ENCODE measurements at regions of chr5 and their contacts with region 1.

Region 1: GRCh38 chr5:67209142-67209771 is 12.7 kb upstream of the CD180 start:
- DNase-seq: peak; percentile 84
- H3K4me3 ChIP-seq: no peak overlapping the region
- H3K27ac ChIP-seq: no peak overlapping the region
- H3K4me1 ChIP-seq: peaks cover 50% of the 10 kb centered on the region
- H3K27me3 ChIP-seq: no peaks in the 10 kb centered on the region
- CTCF ChIP-seq: peak; percentile 50 to 67

Region 2: GRCh38 chr5:66807743-66808142 is 401.5 kb before region 1 on chr5:
- CTCF ChIA-PET with region 1: no interaction called
- dilution Hi-C with region 1: no loop called
- in situ Hi-C with region 1: loop called in 1 of 2 experiments (anchors 10 kb)
- intact Hi-C with region 1: loop called (anchors 1 kb)
- DNase-seq: peak; percentile 80
- H3K4me3 ChIP-seq: no peak overlapping the region
- H3K27ac ChIP-seq: no peak overlapping the region
- H3K4me1 ChIP-seq: peaks cover 11% of the 10 kb centered on the region
- H3K27me3 ChIP-seq: no peaks in the 10 kb centered on the region
- CTCF ChIP-seq: peak; percentile 62 to 75

Region 3: DNA sequence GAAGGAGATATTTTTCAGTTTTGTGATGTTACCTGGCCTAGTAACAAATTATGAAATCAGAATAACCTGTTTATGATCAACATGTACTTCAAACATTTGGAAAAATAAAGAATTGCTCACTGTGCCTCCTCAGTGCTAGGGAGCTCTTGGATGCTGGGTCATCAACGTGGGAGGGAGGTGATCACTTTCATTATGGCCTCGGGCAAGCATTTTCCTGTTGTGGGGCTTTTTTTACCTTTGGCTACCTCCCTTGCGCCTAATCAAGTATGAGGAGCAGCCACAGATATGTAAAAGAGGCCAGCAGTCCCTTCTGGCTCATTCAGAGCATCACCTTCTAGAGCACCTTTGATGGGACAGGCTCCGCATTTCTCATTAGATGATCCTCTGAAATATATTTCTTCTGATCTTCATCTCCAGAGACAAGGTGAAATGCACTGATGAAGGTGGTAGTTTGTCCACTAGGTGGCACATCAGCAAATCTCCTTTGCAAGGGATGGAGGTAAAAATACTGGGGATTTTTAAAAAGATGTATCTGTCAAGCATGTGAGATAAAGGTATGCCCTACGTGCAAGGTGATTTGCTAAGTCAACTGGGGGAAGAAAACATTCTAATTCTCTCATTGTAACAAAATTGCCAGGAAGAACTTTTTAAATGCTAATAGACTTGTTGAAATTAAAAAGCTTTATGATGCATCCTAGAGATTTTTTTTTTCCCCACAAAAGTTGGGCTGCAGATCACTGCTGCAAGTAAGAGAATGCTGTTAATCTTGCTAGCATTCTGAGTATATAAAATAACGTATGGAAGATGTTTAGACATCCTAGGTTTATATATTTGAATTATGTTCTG is 394.9 kb before region 1 on chr5:
- CTCF ChIA-PET with region 1: interaction called, 3 read pairs
- dilution Hi-C with region 1: no loop called
- in situ Hi-C with region 1: loop called in 1 of 2 experiments (anchors 10 kb)
- intact Hi-C with region 1: loop called (anchors 2 kb)
- DNase-seq: peak; percentile 66
- H3K4me3 ChIP-seq: peak overlapping the region in 1 of 3 experiments; percentile 3
- H3K27ac ChIP-seq: no peak overlapping the region
- H3K4me1 ChIP-seq: peaks cover 6% of the 10 kb centered on the region
- H3K27me3 ChIP-seq: no peaks in the 10 kb centered on the region
- CTCF ChIP-seq: peak; percentile 73 to 78

Region 4: DNA sequence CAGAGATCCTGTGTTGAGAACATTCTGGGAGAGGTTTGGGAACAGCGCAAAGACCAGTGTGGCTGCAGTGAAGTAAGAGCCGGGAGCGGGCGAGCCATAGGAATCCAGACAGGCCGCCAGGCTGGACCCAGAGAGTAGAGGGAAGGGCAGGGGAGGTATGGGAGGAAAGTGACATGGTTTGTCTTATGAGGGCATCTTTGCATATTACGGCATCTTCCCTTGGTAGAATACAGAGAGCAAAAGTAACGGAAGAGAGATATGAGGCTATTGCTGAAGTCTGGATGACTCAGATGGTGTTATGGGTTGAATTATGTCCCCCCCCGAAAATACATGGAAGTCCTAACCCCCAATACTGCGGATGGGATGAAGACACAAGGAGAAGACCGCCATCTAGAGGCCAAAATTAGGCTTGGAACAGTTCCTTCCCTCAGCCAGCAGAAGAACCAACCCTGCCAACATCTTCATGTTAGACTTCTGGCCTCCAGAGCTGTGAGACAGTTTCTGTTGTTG is 344.9 kb before region 1 on chr5:
- CTCF ChIA-PET with region 1: interaction called, 9 read pairs
- dilution Hi-C with region 1: no loop called
- in situ Hi-C with region 1: no loop called
- intact Hi-C with region 1: loop called (anchors 1 kb)
- DNase-seq: peak; percentile 65
- H3K4me3 ChIP-seq: no peak overlapping the region
- H3K27ac ChIP-seq: no peak overlapping the region
- H3K4me1 ChIP-seq: peaks cover 11% of the 10 kb centered on the region
- H3K27me3 ChIP-seq: no peaks in the 10 kb centered on the region
- CTCF ChIP-seq: peak; percentile 60 to 73

Region 5: DNA sequence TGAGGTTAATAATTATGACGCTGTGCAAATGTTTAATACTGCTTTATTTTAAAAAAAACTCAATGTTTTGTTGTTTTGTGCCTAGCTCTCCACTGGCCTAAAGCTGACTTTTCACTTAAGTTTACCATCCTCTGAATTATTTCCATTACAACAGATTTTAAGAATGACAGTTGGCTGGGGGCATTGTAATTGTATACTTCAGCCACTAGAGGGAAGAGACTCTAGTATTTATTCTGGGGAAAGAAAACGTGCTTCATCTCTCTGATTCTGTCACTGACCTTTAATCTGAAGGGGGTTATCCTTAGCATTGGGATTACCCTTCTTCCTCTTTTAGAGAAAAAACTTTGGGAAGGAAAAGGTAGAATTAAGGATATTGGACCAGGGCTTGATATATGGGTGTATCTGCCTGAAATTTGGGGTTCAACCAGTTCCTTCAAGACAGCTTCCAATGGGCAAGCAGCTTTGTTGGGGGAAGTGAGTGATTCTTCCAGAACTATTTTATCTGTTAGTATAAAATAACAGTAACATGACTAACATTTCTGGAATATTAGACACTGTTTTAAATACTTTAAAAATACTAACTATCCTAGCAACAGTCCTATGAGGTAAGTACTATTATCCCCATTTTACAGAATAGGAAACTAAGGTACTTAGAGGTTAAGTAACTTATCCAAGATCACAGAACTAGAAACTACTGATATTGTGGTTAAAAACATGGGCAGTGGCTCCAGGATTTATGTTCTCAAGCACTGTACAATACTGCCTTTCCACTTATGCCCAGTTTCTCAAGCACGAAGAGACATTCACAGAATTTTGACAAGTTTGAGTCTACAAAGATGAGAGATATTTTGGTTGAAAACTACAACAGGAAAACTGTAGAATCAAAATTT is 221.1 kb before region 1 on chr5:
- CTCF ChIA-PET with region 1: no interaction called
- dilution Hi-C with region 1: no loop called
- in situ Hi-C with region 1: no loop called
- intact Hi-C with region 1: loop called (anchors 5 kb)
- DNase-seq: no peak
- H3K4me3 ChIP-seq: no peak overlapping the region
- H3K27ac ChIP-seq: peak overlapping the region; percentile 81
- H3K4me1 ChIP-seq: peaks cover 35% of the 10 kb centered on the region
- H3K27me3 ChIP-seq: no peaks in the 10 kb centered on the region
- CTCF ChIP-seq: peak; percentile 75 to 76

Region 6: GRCh38 chr5:67156976-67157583 is 52.2 kb before region 1 on chr5:
- CTCF ChIA-PET with region 1: no interaction called
- dilution Hi-C with region 1: loop called (anchors 5 kb)
- in situ Hi-C with region 1: loop called in 1 of 2 experiments (anchors 5 kb)
- intact Hi-C with region 1: loop called (anchors 1 kb)
- DNase-seq: peak; percentile 35
- H3K4me3 ChIP-seq: no peak overlapping the region
- H3K27ac ChIP-seq: no peak overlapping the region
- H3K4me1 ChIP-seq: peaks cover 23% of the 10 kb centered on the region
- H3K27me3 ChIP-seq: no peaks in the 10 kb centered on the region
- CTCF ChIP-seq: peak; percentile 77 to 82

Region 7: DNA sequence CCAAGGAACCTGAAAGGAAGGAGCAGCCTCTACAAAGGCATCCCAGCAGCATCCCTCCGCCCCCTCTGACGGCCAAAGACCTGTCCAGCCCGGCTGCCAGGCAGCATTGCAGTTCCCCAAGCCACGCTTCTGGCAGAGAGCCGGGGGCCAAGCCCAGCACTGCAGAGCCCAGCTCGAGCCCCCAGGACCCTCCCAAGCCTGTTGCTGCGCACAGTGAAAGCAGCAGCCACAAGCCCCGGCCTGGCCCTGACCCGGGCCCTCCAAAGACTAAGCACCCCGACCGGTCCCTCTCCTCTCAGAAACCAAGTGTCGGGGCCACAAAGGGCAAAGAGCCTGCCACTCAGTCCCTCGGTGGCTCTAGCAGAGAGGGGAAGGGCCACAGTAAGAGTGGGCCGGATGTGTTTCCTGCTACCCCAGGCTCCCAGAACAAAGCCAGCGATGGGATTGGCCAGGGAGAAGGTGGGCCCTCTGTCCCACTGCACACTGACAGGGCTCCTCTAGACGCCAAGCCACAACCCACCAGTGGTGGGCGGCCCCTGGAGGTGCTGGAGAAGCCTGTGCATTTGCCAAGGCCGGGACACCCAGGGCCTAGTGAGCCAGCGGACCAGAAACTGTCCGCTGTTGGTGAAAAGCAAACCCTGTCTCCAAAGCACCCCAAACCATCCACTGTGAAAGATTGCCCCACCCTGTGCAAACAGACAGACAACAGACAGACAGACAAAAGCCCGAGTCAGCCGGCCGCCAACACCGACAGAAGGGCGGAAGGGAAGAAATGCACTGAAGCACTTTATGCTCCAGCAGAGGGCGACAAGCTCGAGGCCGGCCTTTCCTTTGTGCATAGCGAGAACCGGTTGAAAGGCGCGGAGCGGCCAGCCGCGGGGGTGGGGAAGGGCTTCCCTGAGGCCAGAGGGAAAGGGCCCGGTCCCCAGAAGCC is 43.5 kb before region 1 on chr5:
- CTCF ChIA-PET with region 1: interaction called, 7 read pairs
- dilution Hi-C with region 1: loop called (anchors 5 kb)
- in situ Hi-C with region 1: loop called in 1 of 2 experiments (anchors 5 kb)
- intact Hi-C with region 1: loop called (anchors 1 kb)
- DNase-seq: peak; percentile 82
- H3K4me3 ChIP-seq: no peak overlapping the region
- H3K27ac ChIP-seq: peak overlapping the region; percentile 65
- H3K4me1 ChIP-seq: peaks cover 40% of the 10 kb centered on the region
- H3K27me3 ChIP-seq: no peaks in the 10 kb centered on the region
- CTCF ChIP-seq: peak; percentile 71 to 88

Region 8: DNA sequence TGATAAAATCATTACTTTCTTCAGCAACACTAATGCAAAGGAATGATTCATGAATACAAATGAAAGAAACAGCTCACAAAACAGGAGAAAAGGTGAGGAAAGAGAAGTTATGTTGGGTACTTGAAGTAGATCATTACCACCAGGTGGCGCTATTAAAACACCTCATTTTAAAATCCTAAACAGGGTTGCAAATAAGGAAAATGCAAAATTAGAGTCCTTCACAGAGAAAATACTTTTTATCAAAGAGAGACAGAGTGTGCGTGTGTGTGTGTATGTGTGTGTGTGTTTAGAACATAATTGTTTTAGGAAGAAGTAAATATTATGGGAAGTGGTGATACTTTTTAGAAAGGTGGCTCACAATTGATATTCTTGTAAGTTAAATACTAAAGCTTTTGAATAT is 36.9 kb after region 1 on chr5:
- CTCF ChIA-PET with region 1: no interaction called
- dilution Hi-C with region 1: no loop called
- in situ Hi-C with region 1: no loop called
- intact Hi-C with region 1: no loop called
- DNase-seq: peak; percentile 66
- H3K4me3 ChIP-seq: no peak overlapping the region
- H3K27ac ChIP-seq: peak overlapping the region; percentile 30
- H3K4me1 ChIP-seq: peaks cover 46% of the 10 kb centered on the region
- H3K27me3 ChIP-seq: no peaks in the 10 kb centered on the region
- CTCF ChIP-seq: peak; percentile 50 to 61

Measured in mammary epithelial cell (primary cell).